Adrenal gland (tissue), 19 donors: ENCODE measurements at regions of chr9 and their contacts with region 1.

Region 1: GRCh38 chr9:127214421-127215267 is 49.9 kb upstream of the GARNL3 start:
- DNase-seq: peak; percentile 51 to 85 (median 64)
- H3K4me3 ChIP-seq: no peak overlapping the region
- H3K27ac ChIP-seq: no peak overlapping the region
- H3K4me1 ChIP-seq: peaks cover 0 to 3% of the 10 kb centered on the region in 2 donors
- H3K27me3 ChIP-seq: no peaks in the 10 kb centered on the region
- CTCF ChIP-seq: peak; percentile 56 to 80 (median 72)
- POLR2A ChIP-seq: no peak

Region 2: DNA sequence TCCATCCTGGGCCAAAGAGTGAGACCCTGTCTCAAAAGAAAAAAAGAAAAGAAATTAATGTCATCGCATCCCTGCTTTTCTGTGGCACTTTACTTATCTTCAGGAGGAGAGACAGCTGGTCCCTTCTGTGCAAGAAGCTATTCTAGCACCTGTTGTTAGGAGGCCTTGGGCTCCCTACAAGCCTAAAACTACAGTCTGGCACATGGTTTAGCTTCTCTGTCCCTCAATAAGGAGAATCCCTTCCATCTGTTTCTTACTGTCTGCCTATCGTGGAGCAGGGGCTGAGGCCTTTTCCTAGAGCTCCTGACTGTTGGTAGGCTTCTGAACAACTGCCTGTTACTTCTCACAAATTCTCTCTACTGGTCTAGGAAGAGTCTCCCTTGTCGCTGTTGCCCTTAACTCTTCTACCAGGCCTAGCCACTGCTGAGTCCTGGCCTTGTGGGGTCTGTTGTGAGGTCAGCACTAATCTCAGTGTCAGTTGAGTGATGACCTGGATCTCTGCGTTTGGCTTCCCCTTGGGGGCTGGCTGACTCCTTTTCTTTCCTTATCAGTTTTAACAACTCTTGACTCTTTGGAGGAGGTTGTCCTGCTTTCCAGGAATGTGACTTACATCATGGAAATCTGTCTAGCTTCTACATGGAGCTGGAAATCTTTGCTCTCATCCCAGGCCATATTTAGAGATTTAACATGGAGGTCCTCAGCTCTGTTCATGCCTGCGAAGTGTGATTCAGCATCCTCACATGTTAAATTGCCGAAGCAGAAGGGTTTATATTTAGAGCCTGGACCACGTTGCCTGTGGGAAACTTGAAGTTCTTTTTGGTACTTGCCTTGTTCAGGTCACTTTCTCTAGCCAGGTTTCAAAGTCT is 44.2 kb after region 1 on chr9:
- intact Hi-C with region 1: no loop called
- DNase-seq: peak in 2 of 7 donors; percentile 19 to 28
- H3K4me3 ChIP-seq: no peak overlapping the region
- H3K27ac ChIP-seq: peak overlapping the region in 1 of 5 donors; percentile 45
- H3K4me1 ChIP-seq: peaks cover 0 to 7% of the 10 kb centered on the region in 2 donors
- H3K27me3 ChIP-seq: no peaks in the 10 kb centered on the region
- CTCF ChIP-seq: no peak
- POLR2A ChIP-seq: no peak

Region 3: GRCh38 chr9:127277099-127277498 is 62.5 kb after region 1 on chr9:
- intact Hi-C with region 1: no loop called
- DNase-seq: no peak
- H3K4me3 ChIP-seq: no peak overlapping the region
- H3K27ac ChIP-seq: peak overlapping the region in 2 of 5 donors; percentile 61 to 71
- H3K4me1 ChIP-seq: peaks cover 0 to 24% of the 10 kb centered on the region in 2 donors
- H3K27me3 ChIP-seq: no peaks in the 10 kb centered on the region
- CTCF ChIP-seq: no peak
- POLR2A ChIP-seq: no peak

Region 4: GRCh38 chr9:127344368-127345000 is 129.8 kb after region 1 on chr9:
- intact Hi-C with region 1: loop called in 1 of 2 experiments (anchors 5 kb)
- DNase-seq: no peak
- H3K4me3 ChIP-seq: no peak overlapping the region
- H3K27ac ChIP-seq: no peak overlapping the region
- H3K4me1 ChIP-seq: no peaks in the 10 kb centered on the region
- H3K27me3 ChIP-seq: no peaks in the 10 kb centered on the region
- CTCF ChIP-seq: no peak
- POLR2A ChIP-seq: no peak